ENCODE measurements at regions of chr11 and their contacts with region 1.

Region 1: GRCh38 chr11:108620958-108621772 is 27.6 kb upstream of the EXPH5 start:
- DNase-seq: peak; percentile 86
- ATAC-seq: peak; percentile 95
- H3K4me3 ChIP-seq: peak overlapping the region; percentile 39; the same call in 1 of the 2 replicates
- H3K27ac ChIP-seq: peak overlapping the region; percentile 93
- H3K4me1 ChIP-seq: peaks cover 18% of the 10 kb centered on the region
- H3K27me3 ChIP-seq: no peaks in the 10 kb centered on the region
- CTCF ChIP-seq: no peak
- EP300 ChIP-seq: peak; percentile 89 to 94
- POLR2A ChIP-seq: 0 out of 2 replicates have a peak, but pooled peaks have one; percentile 28
- RAD21 ChIP-seq: peak; percentile 16; the same call in 1 of the 2 replicates

Region 2: DNA sequence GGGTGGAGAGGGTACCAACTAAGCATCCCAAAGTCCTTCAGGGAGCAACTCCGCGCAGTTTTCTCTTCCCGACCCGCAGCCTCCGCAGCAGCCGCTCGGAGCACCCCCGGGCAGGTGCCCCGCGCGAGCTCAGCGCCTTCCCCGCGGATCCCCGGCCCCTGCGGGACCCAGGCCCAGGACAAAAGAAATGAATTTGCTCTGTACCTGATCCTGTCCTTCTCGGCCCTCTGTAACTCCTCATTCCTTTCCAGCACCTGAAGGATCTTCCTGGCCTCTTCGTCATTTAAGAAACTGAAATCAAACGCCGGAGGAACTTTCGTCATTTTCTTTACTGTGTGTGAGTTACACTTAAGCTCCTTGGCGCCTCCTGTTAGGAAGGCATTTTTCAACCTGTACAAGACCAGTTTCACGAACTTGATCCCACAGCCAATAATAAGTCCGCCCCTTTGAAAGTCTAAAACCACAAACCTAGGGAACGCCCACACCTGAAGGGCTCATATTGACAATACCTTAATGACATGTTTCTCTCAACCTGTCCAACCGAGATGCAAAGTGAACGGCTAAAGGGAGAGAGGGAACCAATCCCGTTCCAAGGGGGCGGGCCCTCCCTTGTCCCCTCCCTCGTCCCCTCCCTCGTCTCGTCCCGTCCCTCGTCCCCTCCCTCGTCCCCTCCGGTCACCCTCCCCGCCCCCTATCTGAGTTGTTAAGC is 27.8 kb before region 1 on chr11 and contains the start of gene EXPH5:
- CTCF ChIA-PET with region 1: interaction called, 16 read pairs
- POLR2A ChIA-PET with region 1: interaction called, 7 read pairs
- RAD21 ChIA-PET with region 1: interaction called, 13 read pairs
- SMC1A ChIA-PET with region 1: interaction called, 12 read pairs
- in situ Hi-C with region 1: no loop called
- intact Hi-C with region 1: loop called (anchors 1 kb)
- DNase-seq: peak; percentile 82
- ATAC-seq: peak; percentile 95
- H3K4me3 ChIP-seq: peak within 1 kb of the TSS; percentile 96
- H3K27ac ChIP-seq: peak within 1 kb of the TSS; percentile 67
- H3K4me1 ChIP-seq: no peaks in the 10 kb centered on the region; the same call in 1 of the 2 replicates
- H3K27me3 ChIP-seq: no peaks in the 10 kb centered on the region
- CTCF ChIP-seq: 0 out of 6 replicates have a peak, but pooled peaks of 1 of the 3 experiments have one; percentile 3
- EP300 ChIP-seq: no peak
- POLR2A ChIP-seq: no peak
- RAD21 ChIP-seq: no peak; the same call in 1 of the 2 replicates
- polyA plus RNA-seq, gene EXPH5: 0.69 to 4.8 TPM

Region 3: GRCh38 chr11:108609681-108610080 is 11.5 kb before region 1 on chr11:
- CTCF ChIA-PET with region 1: interaction called, 6 read pairs
- POLR2A ChIA-PET with region 1: interaction called, 13 read pairs
- RAD21 ChIA-PET with region 1: interaction called, 8 read pairs
- SMC1A ChIA-PET with region 1: interaction called, 8 read pairs
- in situ Hi-C with region 1: no loop called
- intact Hi-C with region 1: no loop called
- DNase-seq: no peak
- ATAC-seq: no peak
- H3K4me3 ChIP-seq: no peak overlapping the region
- H3K27ac ChIP-seq: no peak overlapping the region
- H3K4me1 ChIP-seq: no peaks in the 10 kb centered on the region
- H3K27me3 ChIP-seq: no peaks in the 10 kb centered on the region
- CTCF ChIP-seq: no peak
- EP300 ChIP-seq: no peak
- POLR2A ChIP-seq: no peak
- RAD21 ChIP-seq: no peak

Region 4: GRCh38 chr11:108635071-108635470 is 13.9 kb after region 1 on chr11:
- CTCF ChIA-PET with region 1: interaction called, 3 read pairs
- POLR2A ChIA-PET with region 1: interaction called, 5 read pairs
- RAD21 ChIA-PET with region 1: interaction called, 7 read pairs
- SMC1A ChIA-PET with region 1: interaction called, 22 read pairs
- in situ Hi-C with region 1: no loop called
- intact Hi-C with region 1: no loop called
- DNase-seq: no peak
- ATAC-seq: no peak
- H3K4me3 ChIP-seq: no peak overlapping the region
- H3K27ac ChIP-seq: no peak overlapping the region
- H3K4me1 ChIP-seq: no peaks in the 10 kb centered on the region
- H3K27me3 ChIP-seq: no peaks in the 10 kb centered on the region
- CTCF ChIP-seq: no peak
- EP300 ChIP-seq: no peak
- POLR2A ChIP-seq: no peak
- RAD21 ChIP-seq: no peak

Measured in GM12878 (cell line).